ENCODE measurements at regions of chr7 and their contacts with region 1.

Region 1: GRCh38 chr7:45923290-45923689 is 2.2 kb upstream of the IGFBP3 start:
- DNase-seq: peak; percentile 71
- H3K4me3 Mint-ChIP-seq: no peak overlapping the region
- H3K27ac Mint-ChIP-seq: no peak overlapping the region
- H3K4me1 Mint-ChIP-seq: peaks cover 45% of the 10 kb centered on the region
- H3K27me3 Mint-ChIP-seq: no peaks in the 10 kb centered on the region
- CTCF ChIP-seq: peak; percentile 88

Region 2: GRCh38 chr7:45563941-45564461 is 359.3 kb before region 1 on chr7:
- CTCF ChIA-PET with region 1: no interaction called
- POLR2A ChIA-PET with region 1: no interaction called
- intact Hi-C with region 1: no loop called
- DNase-seq: no peak
- H3K4me3 Mint-ChIP-seq: no peak overlapping the region
- H3K27ac Mint-ChIP-seq: no peak overlapping the region
- H3K4me1 Mint-ChIP-seq: no peaks in the 10 kb centered on the region
- H3K27me3 Mint-ChIP-seq: peaks cover 88% of the 10 kb centered on the region
- CTCF ChIP-seq: no peak

Region 3: DNA sequence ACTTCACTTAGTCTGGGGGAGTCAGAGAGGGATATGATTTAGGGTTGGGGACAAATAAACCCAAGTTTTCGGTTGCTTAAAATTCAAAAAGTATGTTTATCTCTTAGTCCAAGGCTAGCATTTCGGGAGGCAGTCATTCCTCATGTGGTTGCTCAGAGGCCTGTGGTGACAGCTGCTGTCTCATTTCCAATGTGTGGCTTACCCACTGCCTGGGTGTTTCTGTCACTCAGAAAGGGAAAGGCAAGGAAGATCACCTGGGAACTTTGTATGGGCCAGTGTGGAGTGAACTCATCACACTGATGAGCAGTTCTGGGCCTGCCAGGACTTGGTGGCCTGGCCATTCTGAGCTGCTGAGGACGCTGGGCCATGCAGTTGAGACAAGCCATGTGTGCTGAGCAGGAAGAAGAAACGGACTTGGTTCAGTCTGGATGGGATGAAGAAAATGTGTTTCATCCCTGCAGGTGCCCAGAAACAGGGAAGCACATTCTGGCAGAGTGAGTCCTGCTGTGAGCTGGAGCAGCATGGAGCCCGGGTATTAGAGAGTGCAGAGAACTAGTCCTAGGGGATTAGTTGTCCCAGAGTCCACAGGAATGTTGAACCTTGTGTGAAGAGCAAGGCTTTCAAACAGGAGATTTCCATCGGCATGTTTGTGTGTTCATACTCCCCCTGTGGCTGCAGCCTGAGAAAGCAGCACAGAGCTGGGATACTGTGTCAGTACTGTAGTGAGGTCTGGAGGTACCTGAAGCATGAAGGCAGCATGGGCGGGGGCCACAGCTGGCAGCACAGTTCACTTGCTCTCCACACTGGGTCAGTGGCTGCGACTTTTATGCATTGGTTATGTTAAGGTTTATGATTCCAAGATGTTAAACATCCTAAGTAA is 208.9 kb after region 1 on chr7:
- CTCF ChIA-PET with region 1: interaction called, 4 read pairs
- POLR2A ChIA-PET with region 1: no interaction called
- intact Hi-C with region 1: loop called (anchors 5 kb)
- DNase-seq: peak; percentile 6
- H3K4me3 Mint-ChIP-seq: no peak overlapping the region
- H3K27ac Mint-ChIP-seq: no peak overlapping the region
- H3K4me1 Mint-ChIP-seq: peaks cover 12% of the 10 kb centered on the region
- H3K27me3 Mint-ChIP-seq: no peaks in the 10 kb centered on the region
- CTCF ChIP-seq: no peak

Region 4: GRCh38 chr7:46257766-46258448 is 334.6 kb after region 1 on chr7:
- CTCF ChIA-PET with region 1: interaction called, 3 read pairs
- POLR2A ChIA-PET with region 1: no interaction called
- intact Hi-C with region 1: loop called (anchors 2 kb)
- DNase-seq: peak; percentile 79
- H3K4me3 Mint-ChIP-seq: no peak overlapping the region
- H3K27ac Mint-ChIP-seq: peak overlapping the region; percentile 18
- H3K4me1 Mint-ChIP-seq: peaks cover 20% of the 10 kb centered on the region
- H3K27me3 Mint-ChIP-seq: no peaks in the 10 kb centered on the region
- CTCF ChIP-seq: no peak

Region 5: DNA sequence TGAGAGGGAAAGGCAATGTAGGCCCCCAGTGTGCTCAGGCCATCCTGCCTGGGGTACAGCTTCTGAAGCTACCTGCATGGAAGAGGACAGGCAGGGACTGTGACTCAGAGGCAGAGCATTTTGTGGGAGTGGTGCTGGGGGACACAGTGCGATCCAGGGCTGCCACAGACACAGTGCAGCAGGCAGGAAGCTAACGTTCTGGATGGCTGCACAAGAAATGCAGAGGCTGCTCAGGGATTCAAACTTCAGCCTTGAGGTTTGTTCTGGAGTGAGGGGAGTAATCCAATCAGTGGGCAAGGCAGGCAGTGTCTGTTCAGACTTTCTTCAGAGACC is 645.8 kb after region 1 on chr7:
- CTCF ChIA-PET with region 1: interaction called, 3 read pairs
- POLR2A ChIA-PET with region 1: no interaction called
- intact Hi-C with region 1: loop called (anchors 10 kb)
- DNase-seq: peak; percentile 48
- H3K4me3 Mint-ChIP-seq: peak overlapping the region; percentile 21
- H3K27ac Mint-ChIP-seq: peak overlapping the region; percentile 86
- H3K4me1 Mint-ChIP-seq: peaks cover 41% of the 10 kb centered on the region
- H3K27me3 Mint-ChIP-seq: no peaks in the 10 kb centered on the region
- CTCF ChIP-seq: no peak

Region 6: DNA sequence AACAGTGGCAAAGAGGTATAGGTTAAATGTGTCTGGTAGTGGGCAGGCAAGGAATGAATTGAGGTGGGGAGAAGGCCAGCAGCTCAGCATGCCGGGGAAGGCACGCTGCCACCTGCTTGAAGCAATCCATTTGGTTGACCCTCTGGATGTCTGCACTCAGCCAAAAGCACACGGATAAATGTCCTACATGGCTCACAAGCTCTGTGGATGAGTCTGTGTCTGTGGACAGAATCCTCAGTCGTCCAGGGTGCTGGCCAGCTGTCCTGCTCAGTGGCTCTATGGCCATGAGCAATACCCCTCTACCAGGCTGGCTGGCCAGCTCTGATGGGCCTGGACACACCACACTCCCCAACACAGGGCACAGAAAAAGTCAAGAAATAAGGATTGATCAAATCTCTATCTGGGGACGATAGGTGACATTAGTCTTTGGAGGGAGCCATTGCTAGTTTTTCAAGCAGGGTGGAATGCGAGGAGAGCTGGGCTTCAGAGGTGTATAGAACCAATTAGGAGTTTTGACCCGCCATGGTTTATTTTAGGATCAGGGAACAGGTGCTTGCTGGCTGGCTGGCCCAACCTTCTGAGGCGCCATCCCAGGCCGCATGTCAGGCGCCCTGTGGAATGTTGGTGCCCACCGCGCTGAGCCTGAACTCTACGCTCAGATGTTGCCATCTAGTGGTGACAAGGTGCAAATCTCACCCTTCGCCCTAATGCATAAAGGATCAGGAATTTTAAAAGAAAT is 1165.2 kb after region 1 on chr7:
- CTCF ChIA-PET with region 1: interaction called, 11 read pairs
- POLR2A ChIA-PET with region 1: no interaction called
- intact Hi-C with region 1: loop called (anchors 1 kb)
- DNase-seq: peak; percentile 64
- H3K4me3 Mint-ChIP-seq: no peak overlapping the region
- H3K27ac Mint-ChIP-seq: peak overlapping the region; percentile 52
- H3K4me1 Mint-ChIP-seq: peaks cover 13% of the 10 kb centered on the region
- H3K27me3 Mint-ChIP-seq: no peaks in the 10 kb centered on the region
- CTCF ChIP-seq: peak; percentile 87

Region 7: GRCh38 chr7:47254081-47255006 is 1331.1 kb after region 1 on chr7:
- CTCF ChIA-PET with region 1: interaction called, 6 read pairs
- POLR2A ChIA-PET with region 1: no interaction called
- intact Hi-C with region 1: loop called (anchors 2 kb)
- DNase-seq: peak; percentile 55
- H3K4me3 Mint-ChIP-seq: peak overlapping the region; percentile 67
- H3K27ac Mint-ChIP-seq: peak overlapping the region; percentile 14
- H3K4me1 Mint-ChIP-seq: peaks cover 6% of the 10 kb centered on the region
- H3K27me3 Mint-ChIP-seq: no peaks in the 10 kb centered on the region
- CTCF ChIP-seq: peak; percentile 88